HEK293 (cell line): ENCODE measurements at regions of chr21 and their contacts with region 1.

Region 1: DNA sequence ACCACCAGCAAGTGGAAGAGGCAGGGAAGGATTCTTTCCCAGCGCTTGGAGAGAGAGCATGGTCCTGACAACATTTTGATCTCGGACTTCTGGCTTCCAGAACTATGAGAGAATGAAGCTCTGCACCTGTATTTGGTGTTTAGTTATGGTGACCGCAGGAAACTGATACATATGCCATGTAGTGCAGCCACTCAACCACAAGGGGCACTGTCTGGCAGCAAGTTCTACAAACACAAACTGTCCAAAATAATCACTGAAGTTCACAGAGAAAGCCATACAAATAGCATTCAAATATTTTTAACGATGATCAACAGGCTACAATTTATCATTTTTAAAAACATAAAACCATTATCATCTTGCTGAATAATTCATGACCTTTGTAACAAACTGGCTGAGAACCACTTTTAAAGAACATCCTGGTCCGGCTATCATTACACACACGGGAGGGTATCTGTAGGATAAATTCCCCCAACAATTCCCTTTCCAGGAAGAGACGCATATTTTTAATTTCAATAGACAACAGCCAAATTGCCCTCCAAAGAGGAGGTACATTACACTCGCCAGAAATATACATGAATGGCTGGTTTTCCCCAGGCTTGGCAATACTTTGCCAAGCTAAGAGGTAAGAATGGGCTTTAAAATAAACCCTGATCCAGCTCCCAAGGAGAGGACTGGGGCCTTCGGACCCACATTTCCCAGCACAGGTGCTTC is 9.2 kb upstream of the CBR3 start:
- H3K4me3 ChIP-seq: no peak overlapping the region
- H3K27ac ChIP-seq: no peak overlapping the region
- H3K4me1 ChIP-seq: peaks cover 2% of the 10 kb centered on the region; the same call in 1 of the 2 replicates
- CTCF ChIP-seq: peak; percentile 68

Region 2: DNA sequence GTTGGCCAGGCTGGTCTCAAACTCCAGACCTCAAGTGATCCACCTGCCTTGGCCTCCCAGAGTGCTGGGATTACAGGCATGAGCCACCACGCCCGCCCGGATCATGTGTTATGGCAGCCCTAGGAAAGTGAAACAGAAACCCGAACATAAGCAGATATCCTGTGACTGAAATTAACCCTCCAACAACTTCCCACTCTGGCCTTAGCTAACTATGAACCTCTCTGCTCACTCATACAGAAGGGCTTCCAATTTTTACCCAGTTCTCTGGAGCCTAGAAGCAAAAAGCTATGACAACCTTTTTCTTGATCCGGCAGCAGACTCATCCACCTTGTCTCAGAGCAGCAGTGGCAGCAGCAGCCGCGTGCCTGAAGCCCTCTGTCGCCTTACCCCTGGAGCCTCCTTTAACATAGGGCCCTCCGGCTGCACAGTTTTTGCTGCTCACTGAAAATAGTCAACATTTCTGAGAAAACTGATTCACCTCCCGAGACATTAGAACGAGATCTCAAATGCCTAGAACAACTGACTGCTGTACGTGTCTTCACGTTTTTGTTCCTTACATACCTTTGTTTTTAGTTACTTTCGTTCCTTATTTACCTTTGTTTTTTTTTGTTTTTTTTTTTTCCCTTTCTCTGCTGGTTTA is 46.5 kb before region 1 on chr21:
- CTCF ChIA-PET with region 1: interaction called, 10 read pairs
- POLR2A ChIA-PET with region 1: no interaction called
- H3K4me3 ChIP-seq: no peak overlapping the region
- H3K27ac ChIP-seq: no peak overlapping the region
- H3K4me1 ChIP-seq: no peaks in the 10 kb centered on the region
- CTCF ChIP-seq: no peak

Region 3: DNA sequence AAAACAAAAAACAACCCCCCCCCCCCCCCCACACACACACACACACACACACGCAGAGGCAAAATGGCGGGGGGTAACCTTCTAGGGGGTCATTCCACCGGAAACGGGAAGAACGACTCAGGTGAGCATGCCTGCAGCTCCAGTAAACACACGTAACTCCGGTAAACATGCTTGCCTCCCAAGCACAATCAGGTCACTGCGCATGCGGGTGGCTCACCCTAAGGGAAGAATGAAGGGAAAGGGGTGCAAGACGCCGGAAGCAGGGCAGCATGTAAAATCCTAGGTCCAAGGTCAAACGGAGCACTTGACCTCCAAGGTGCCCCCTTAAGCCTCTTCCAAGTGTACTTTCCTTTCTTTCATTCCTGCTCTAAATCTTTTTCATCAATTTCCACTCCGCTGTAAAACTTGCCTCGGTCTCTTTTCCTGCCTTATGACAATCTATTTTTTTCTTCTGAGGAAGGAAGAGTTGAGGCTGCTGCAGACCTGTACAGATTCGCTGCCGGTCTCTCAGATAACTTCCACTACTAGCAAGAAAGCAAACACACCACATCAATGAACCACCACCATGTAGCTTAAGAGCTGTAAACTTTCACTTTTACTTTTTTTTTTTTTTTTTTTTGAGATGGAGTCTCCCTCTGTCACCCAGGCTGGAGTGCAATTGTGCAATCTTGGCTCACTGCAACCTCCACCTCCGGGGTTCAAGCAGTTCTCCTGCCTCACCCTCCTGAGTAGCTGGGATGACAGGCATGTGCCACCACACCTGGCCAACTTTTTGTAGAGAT is 11.8 kb before region 1 on chr21:
- CTCF ChIA-PET with region 1: interaction called, 39 read pairs
- POLR2A ChIA-PET with region 1: no interaction called
- H3K4me3 ChIP-seq: no peak overlapping the region
- H3K27ac ChIP-seq: no peak overlapping the region
- H3K4me1 ChIP-seq: no peaks in the 10 kb centered on the region
- CTCF ChIP-seq: no peak

Region 4: DNA sequence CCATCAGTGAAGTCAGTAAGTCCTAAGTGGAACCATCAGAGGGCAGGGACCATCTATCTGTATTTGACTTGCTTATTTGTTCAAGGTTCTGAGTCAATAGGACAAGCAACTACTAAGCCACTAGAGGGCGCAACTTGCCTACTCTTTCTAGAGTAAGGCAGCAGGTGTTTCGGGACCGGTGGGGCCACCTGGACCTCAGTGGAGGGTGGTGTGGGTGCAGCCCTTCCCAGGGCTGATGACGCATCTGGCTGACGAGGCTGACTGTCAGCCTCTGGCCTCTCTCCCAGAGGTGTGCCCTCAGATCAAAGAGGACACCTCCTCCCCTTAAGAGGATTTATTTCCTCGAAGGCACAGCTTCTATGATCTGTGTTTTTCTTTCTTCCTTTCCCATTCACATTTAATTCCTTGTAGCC is 15.9 kb after region 1 on chr21:
- CTCF ChIA-PET with region 1: interaction called, 15 read pairs
- POLR2A ChIA-PET with region 1: interaction called, 3 read pairs
- H3K4me3 ChIP-seq: no peak overlapping the region
- H3K27ac ChIP-seq: no peak overlapping the region
- H3K4me1 ChIP-seq: no peaks in the 10 kb centered on the region
- CTCF ChIP-seq: peak; percentile 95

Region 5: DNA sequence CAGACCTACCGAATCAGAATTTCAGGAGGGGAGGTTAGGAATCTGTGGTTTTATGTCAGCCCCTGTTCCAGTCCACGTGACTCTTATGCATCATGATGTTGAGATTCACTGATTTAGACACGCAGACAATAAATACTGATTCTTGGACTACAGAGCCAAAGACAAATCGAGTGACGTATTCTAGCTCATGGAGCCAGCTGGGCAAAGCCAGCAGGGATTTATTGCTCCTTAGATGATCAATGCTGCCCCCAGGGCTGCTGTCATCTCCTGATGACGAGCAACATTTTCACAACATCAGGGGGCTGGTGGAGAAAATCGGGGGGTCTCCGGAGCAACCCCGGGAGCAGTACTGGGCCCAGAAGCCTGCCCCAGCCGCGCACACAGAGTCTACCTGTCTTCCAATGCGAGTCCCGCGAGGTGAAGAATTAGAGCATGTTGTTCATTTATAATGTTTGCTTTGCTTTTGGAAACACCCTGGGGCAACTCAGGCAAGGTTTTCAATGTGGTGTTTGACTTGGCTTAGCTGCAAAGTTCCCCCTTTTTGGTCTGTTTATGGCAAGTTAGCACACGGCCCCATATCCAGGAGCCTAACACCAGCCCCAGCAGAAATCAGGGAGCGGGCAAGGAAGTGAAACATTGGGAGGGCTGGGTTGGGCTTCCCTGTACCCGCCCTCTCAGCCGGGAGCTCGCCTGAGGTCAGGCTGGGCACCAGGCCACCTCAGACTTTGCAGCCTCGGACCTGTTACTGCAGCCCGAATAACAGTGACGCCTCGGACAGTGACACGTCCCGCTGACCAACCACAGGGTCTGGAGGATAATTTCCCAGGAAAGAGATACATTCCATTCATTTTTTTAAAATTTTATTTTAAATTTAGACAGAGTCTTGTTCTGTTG is 374.2 kb after region 1 on chr21:
- CTCF ChIA-PET with region 1: no interaction called
- POLR2A ChIA-PET with region 1: no interaction called
- H3K4me3 ChIP-seq: no peak overlapping the region
- H3K27ac ChIP-seq: peak overlapping the region; percentile 53; the same call in 1 of the 2 replicates
- H3K4me1 ChIP-seq: peaks cover 34% of the 10 kb centered on the region
- CTCF ChIP-seq: no peak